Activated CD4-positive, alpha-beta memory T cell treated with anti-CD3 and anti-CD28 coated beads, Interleukin-2, amount 10 ng/mL, durations not matched to agents 7 days and 5 days (primary cell): ENCODE measurements at regions of chr4 and their contacts with region 1.

Region 1: GRCh38 chr4:139295206-139295941 is 5.9 kb upstream of the NAA15 start:
- DNase-seq: peak; percentile 96
- H3K4me3 Mint-ChIP-seq: peak overlapping the region; percentile 92
- H3K27ac Mint-ChIP-seq: peak overlapping the region; percentile 78
- H3K4me1 Mint-ChIP-seq: peaks cover 33% of the 10 kb centered on the region
- H3K27me3 Mint-ChIP-seq: no peaks in the 10 kb centered on the region

Region 2: GRCh38 chr4:139083956-139084803 is 211.2 kb before region 1 on chr4:
- CTCF ChIA-PET with region 1: interaction called, 12 read pairs
- POLR2A ChIA-PET with region 1: interaction called, 46 read pairs
- DNase-seq: peak; percentile 86
- H3K4me3 Mint-ChIP-seq: peak overlapping the region; percentile 80
- H3K27ac Mint-ChIP-seq: peak overlapping the region; percentile 98
- H3K4me1 Mint-ChIP-seq: peaks cover 39% of the 10 kb centered on the region
- H3K27me3 Mint-ChIP-seq: no peaks in the 10 kb centered on the region

Region 3: DNA sequence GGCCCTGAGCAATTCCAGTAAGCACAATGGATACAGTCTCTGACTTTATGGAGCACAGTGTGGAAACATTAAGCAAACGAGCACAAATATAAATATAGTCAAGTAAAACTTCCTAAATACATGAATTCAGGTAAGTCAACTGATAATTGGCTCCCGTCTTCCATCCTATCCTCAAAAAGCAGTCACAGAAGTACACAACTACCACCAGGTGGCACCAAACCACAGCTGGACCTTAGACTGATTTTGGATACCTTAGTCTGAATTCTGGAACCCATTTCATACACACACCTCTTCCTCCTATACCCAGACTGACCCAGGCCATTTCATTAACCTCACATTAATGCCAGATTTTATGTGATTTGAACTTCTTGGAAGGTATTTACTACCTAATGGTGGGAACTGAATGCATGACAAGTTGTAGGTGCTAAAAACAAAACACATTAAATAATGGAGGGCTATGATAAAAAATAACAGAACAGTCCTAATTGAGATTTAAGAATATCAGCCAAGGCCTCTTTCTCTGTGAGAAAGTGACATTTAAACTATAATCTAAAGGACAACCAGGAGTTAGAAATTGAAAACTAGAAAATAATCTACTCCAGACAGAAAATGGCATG is 195.9 kb before region 1 on chr4:
- CTCF ChIA-PET with region 1: interaction called, 61 read pairs
- POLR2A ChIA-PET with region 1: no interaction called
- DNase-seq: peak; percentile 78
- H3K4me3 Mint-ChIP-seq: no peak overlapping the region
- H3K27ac Mint-ChIP-seq: no peak overlapping the region
- H3K4me1 Mint-ChIP-seq: no peaks in the 10 kb centered on the region
- H3K27me3 Mint-ChIP-seq: no peaks in the 10 kb centered on the region

Region 4: GRCh38 chr4:139188648-139189416 is 106.5 kb before region 1 on chr4:
- CTCF ChIA-PET with region 1: interaction called, 10 read pairs
- POLR2A ChIA-PET with region 1: no interaction called
- DNase-seq: no peak
- H3K4me3 Mint-ChIP-seq: no peak overlapping the region
- H3K27ac Mint-ChIP-seq: no peak overlapping the region
- H3K4me1 Mint-ChIP-seq: peaks cover 6% of the 10 kb centered on the region
- H3K27me3 Mint-ChIP-seq: peaks cover 6% of the 10 kb centered on the region

Region 5: DNA sequence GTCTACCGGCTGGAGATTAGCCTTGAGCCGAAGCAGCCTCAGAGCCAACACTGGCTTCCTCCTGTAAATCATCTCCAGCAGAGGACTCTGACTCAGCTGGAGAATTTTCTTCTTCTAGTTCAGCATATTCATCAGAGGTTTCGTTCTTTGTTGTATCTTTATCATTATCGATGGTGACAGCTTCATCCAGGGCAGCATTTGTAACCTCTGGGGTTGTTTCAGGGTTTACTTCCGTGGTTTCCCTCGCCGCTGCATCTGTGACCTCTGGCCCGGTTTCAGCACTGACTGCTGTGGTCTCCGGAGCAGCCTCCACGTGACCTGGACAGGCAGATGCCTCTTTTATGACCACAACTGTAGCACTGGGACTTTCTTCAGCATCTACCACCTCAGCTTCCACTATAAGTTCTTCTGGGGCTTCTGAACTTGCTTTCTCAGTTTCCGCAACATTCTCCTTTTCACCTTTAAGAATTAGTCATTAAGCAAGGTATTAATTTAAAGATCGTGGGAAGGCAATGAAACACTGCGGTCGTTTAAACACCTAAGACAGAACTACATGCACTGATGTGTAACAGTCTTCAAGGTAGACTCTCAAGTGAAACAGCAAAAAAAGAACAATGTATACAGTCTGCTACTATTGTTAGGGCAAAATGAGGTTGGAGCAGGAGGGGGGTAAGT is 28.7 kb before region 1 on chr4:
- CTCF ChIA-PET with region 1: interaction called, 33 read pairs
- POLR2A ChIA-PET with region 1: interaction called, 24 read pairs
- DNase-seq: peak; percentile 88
- H3K4me3 Mint-ChIP-seq: peak overlapping the region; percentile 59
- H3K27ac Mint-ChIP-seq: peak overlapping the region; percentile 60
- H3K4me1 Mint-ChIP-seq: peaks cover 32% of the 10 kb centered on the region
- H3K27me3 Mint-ChIP-seq: peaks cover 14% of the 10 kb centered on the region

Region 6: GRCh38 chr4:139315221-139315675 is 19.9 kb after region 1 on chr4:
- CTCF ChIA-PET with region 1: interaction called, 12 read pairs
- POLR2A ChIA-PET with region 1: interaction called, 25 read pairs
- DNase-seq: no peak
- H3K4me3 Mint-ChIP-seq: no peak overlapping the region
- H3K27ac Mint-ChIP-seq: peak overlapping the region; percentile 61
- H3K4me1 Mint-ChIP-seq: peaks cover 70% of the 10 kb centered on the region
- H3K27me3 Mint-ChIP-seq: no peaks in the 10 kb centered on the region